ENCODE measurements at regions of chrX and their contacts with region 1.

Region 1: GRCh38 chrX:102950908-102951866 is 14.1 kb downstream of the RAB40AL start:
- DNase-seq: no peak
- H3K4me3 ChIP-seq: peak overlapping the region in 2 of 4 donors; percentile 3
- H3K27ac ChIP-seq: no peak overlapping the region
- H3K4me1 ChIP-seq: no peaks in the 10 kb centered on the region
- H3K27me3 ChIP-seq: no peaks in the 10 kb centered on the region
- CTCF ChIP-seq: peak in 2 of 4 experiments; percentile 30 to 43
- EP300 ChIP-seq: no peak
- POLR2A ChIP-seq: no peak

Region 2: GRCh38 chrX:103157496-103158320 is 206.5 kb after region 1 on chrX:
- intact Hi-C with region 1: loop called (anchors 5 kb)
- DNase-seq: no peak
- H3K4me3 ChIP-seq: no peak overlapping the region
- H3K27ac ChIP-seq: no peak overlapping the region
- H3K4me1 ChIP-seq: no peaks in the 10 kb centered on the region
- H3K27me3 ChIP-seq: no peaks in the 10 kb centered on the region
- CTCF ChIP-seq: peak in 2 of 4 experiments; percentile 6 to 44
- EP300 ChIP-seq: no peak
- POLR2A ChIP-seq: no peak

Region 3: GRCh38 chrX:103175944-103176753 is 225.0 kb after region 1 on chrX:
- intact Hi-C with region 1: loop called (anchors 2 kb)
- DNase-seq: peak; percentile 64
- H3K4me3 ChIP-seq: peak overlapping the region in 1 of 4 donors; percentile 16
- H3K27ac ChIP-seq: no peak overlapping the region
- H3K4me1 ChIP-seq: peaks cover 0 to 4% (median 0%) of the 10 kb centered on the region in 4 donors
- H3K27me3 ChIP-seq: no peaks in the 10 kb centered on the region
- CTCF ChIP-seq: peak; percentile 16 to 50 (median 43)
- EP300 ChIP-seq: no peak
- POLR2A ChIP-seq: no peak